Posterior vena cava (tissue), 2 donors: ENCODE measurements at regions of chr5 and their contacts with region 1.

Region 1: DNA sequence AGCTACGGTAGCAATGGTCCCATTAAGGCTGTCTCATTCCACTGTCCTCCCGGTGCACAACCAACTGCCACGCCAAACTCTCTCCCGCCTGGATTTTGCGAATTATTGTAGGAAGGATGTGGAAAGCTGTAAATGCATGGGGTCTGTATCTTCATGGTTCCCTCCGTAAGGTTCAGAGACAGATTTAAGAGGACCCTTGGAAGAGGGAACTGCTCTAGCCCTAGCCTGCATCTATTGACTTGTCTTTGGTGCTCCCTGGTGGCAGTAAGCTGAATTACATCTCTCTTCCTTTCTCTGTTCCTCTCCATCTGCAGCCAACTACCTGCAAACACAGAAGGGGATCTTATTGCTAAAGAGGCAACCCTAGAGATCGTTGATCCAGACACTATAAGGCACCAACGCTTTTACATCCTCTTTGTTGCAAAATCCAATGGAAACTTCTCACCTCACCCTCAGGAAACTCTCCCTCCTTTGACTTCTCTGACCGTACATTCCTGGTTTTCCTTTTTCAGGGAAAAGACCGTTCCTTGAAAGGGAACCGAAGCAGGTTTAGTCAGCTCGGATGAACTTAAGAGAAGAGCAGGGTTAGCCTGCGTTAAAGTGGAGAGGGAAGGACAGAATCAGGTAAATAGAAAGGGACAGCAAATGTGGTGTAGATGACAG is 11.9 kb downstream of the CAPSL start:
- DNase-seq: no peak

Region 2: DNA sequence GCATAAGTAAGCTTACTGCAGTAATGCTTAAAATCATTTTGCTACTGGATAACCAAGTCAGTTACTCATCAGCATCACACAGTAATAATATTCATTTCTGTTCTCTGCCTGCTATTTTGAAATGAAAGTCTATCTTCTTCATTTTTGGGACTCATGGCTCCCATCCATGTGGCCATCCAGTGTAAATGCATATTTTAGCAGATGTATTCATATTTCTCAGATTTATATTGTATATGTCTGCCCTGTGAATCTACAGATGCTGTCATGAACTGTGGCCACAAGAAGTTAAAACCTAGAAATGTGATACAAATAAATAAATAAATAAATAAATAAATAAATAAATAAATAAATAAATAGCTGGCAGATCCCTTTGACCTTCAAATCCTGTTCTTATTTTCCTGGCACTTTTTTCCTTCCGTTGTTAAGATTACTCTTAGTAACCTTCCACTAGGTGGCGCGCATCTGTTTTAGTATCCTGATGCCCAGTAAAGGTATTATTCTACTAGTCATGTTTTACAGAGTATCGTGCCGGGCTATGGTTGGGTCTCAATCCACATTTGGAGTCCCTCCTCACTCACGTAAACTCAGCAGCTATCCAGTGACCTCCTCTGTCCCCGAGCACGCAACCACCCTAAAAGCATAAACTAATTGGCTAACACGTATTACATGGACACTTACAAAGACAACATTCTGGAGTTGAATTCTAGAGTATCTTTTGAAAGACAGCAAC is 149.0 kb before region 1 on chr5:
- intact Hi-C with region 1: loop called in 1 of 2 experiments (anchors 10 kb)
- DNase-seq: no peak

Region 3: DNA sequence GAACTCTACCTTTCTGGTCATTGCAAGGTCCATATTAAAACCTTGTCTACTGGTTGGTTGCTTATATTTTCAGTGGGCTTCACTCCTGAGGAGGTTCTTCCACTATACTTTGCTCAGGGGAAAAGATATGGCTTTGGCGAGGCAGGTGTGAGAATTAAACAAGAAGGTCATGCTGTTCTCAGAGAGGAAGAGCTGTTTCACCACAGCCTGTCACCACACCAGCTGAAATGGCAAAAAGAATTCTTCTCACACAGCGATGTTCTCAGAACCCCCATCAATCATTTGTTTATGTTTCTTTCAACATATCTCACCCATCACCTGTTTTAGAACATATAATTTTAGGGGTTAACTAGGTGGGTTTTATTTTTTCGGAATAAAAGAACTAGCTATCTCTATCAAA is 26.7 kb before region 1 on chr5:
- intact Hi-C with region 1: no loop called
- DNase-seq: no peak